Endothelial cell of umbilical vein (primary cell): ENCODE measurements at regions of chr6 and their contacts with region 1.

Region 1: GRCh38 chr6:157579467-157580031 is 198.6 kb downstream of the ZDHHC14 start:
- DNase-seq: peak; percentile 90
- H3K4me3 ChIP-seq: no peak overlapping the region
- H3K27ac ChIP-seq: peak overlapping the region; percentile 74
- H3K4me1 ChIP-seq: peaks cover 21% of the 10 kb centered on the region
- H3K27me3 ChIP-seq: no peaks in the 10 kb centered on the region
- CTCF ChIP-seq: no peak
- POLR2A ChIP-seq: no peak

Region 2: GRCh38 chr6:157486572-157486971 is 93.0 kb before region 1 on chr6:
- CTCF ChIA-PET with region 1: no interaction called
- POLR2A ChIA-PET with region 1: interaction called, 10 read pairs
- dilution Hi-C with region 1: no loop called
- intact Hi-C with region 1: no loop called
- DNase-seq: no peak
- H3K4me3 ChIP-seq: no peak overlapping the region
- H3K27ac ChIP-seq: no peak overlapping the region
- H3K4me1 ChIP-seq: no peaks in the 10 kb centered on the region
- H3K27me3 ChIP-seq: no peaks in the 10 kb centered on the region
- CTCF ChIP-seq: no peak
- POLR2A ChIP-seq: no peak

Region 3: GRCh38 chr6:157497579-157497978 is 82.0 kb before region 1 on chr6:
- CTCF ChIA-PET with region 1: no interaction called
- POLR2A ChIA-PET with region 1: no interaction called
- dilution Hi-C with region 1: no loop called
- intact Hi-C with region 1: loop called (anchors 2 kb)
- DNase-seq: no peak
- H3K4me3 ChIP-seq: no peak overlapping the region
- H3K27ac ChIP-seq: no peak overlapping the region
- H3K4me1 ChIP-seq: peaks cover 45% of the 10 kb centered on the region
- H3K27me3 ChIP-seq: no peaks in the 10 kb centered on the region
- CTCF ChIP-seq: no peak
- POLR2A ChIP-seq: no peak

Region 4: GRCh38 chr6:158242071-158242606 is 662.6 kb after region 1 on chr6:
- CTCF ChIA-PET with region 1: no interaction called
- POLR2A ChIA-PET with region 1: no interaction called
- dilution Hi-C with region 1: no loop called
- intact Hi-C with region 1: no loop called
- DNase-seq: no peak
- H3K4me3 ChIP-seq: no peak overlapping the region
- H3K27ac ChIP-seq: no peak overlapping the region
- H3K4me1 ChIP-seq: no peaks in the 10 kb centered on the region
- H3K27me3 ChIP-seq: no peaks in the 10 kb centered on the region
- CTCF ChIP-seq: no peak
- POLR2A ChIP-seq: no peak